Prostate gland (tissue), 2 donors: ENCODE measurements at regions of chr19 and their contacts with region 1.

Region 1: GRCh38 chr19:3618144-3618810 is 8.3 kb downstream of the CACTIN start:
- DNase-seq: peak; percentile 48
- H3K4me3 ChIP-seq: no peak overlapping the region
- H3K27ac ChIP-seq: no peak overlapping the region
- H3K4me1 ChIP-seq: no peaks in the 10 kb centered on the region
- H3K27me3 ChIP-seq: no peaks in the 10 kb centered on the region
- CTCF ChIP-seq: peak; percentile 79 to 95 (median 92)
- POLR2A ChIP-seq: no peak

Region 2: GRCh38 chr19:3304871-3305423 is 313.3 kb before region 1 on chr19:
- intact Hi-C with region 1: loop called (anchors 10 kb)
- DNase-seq: peak; percentile 45
- H3K4me3 ChIP-seq: no peak overlapping the region
- H3K27ac ChIP-seq: no peak overlapping the region
- H3K4me1 ChIP-seq: no peaks in the 10 kb centered on the region
- H3K27me3 ChIP-seq: peaks cover 2% of the 10 kb centered on the region
- CTCF ChIP-seq: peak; percentile 71 to 89 (median 84)
- POLR2A ChIP-seq: no peak

Region 3: DNA sequence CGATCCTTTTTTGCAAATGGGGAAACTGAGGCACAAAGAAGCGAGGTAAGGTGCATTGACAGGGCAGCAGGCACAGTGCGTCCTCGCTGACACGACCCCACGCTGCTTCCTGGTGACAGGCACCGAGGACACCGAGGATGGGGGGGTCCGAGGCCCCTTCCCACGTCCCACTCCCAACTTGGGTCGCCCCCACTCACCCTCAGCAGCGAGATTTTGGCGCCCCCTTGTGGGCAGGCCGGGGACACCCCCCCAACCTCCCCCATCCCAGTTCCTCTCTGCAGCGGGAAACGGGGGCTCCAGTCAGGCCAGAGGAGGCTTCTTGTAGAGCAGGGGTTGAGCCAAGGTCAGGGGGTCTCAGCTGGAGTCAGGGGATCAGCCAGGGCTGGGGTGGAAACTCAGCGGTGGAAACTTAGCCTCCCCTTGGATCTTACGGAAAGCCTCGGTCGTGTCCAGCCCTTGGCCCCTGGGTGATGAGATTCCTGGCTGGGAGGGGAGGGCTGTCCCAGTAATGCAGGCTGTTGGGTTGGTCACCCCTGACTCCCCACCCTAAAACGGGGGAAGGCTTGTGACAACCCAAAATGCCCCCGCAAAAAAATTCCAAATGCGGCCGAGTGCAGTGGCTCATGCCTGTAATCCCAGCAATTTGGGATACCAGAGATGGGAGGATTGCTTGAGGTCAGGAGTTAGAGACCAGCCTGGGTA is 146.2 kb before region 1 on chr19:
- intact Hi-C with region 1: no loop called
- DNase-seq: peak; percentile 19
- H3K4me3 ChIP-seq: no peak overlapping the region
- H3K27ac ChIP-seq: no peak overlapping the region
- H3K4me1 ChIP-seq: no peaks in the 10 kb centered on the region
- H3K27me3 ChIP-seq: no peaks in the 10 kb centered on the region
- CTCF ChIP-seq: peak; percentile 75 to 90 (median 83)
- POLR2A ChIP-seq: no peak

Region 4: GRCh38 chr19:3544742-3545668 is 73.3 kb before region 1 on chr19:
- intact Hi-C with region 1: loop called (anchors 5 kb)
- DNase-seq: peak; percentile 48
- H3K4me3 ChIP-seq: no peak overlapping the region
- H3K27ac ChIP-seq: no peak overlapping the region
- H3K4me1 ChIP-seq: no peaks in the 10 kb centered on the region
- H3K27me3 ChIP-seq: no peaks in the 10 kb centered on the region
- CTCF ChIP-seq: peak; percentile 76 to 94 (median 90)
- POLR2A ChIP-seq: no peak

Region 5: GRCh38 chr19:3687774-3688706 is 69.8 kb after region 1 on chr19:
- intact Hi-C with region 1: no loop called
- DNase-seq: peak; percentile 58
- H3K4me3 ChIP-seq: peak overlapping the region; percentile 18 to 20
- H3K27ac ChIP-seq: peak overlapping the region; percentile 41 to 70
- H3K4me1 ChIP-seq: peaks cover 10% of the 10 kb centered on the region
- H3K27me3 ChIP-seq: no peaks in the 10 kb centered on the region
- CTCF ChIP-seq: no peak
- POLR2A ChIP-seq: no peak